Posterior vena cava (tissue), 2 donors: ENCODE measurements at regions of chr10 and their contacts with region 1.

Region 1: GRCh38 chr10:123624086-123624485 is 42.1 kb upstream of the GPR26 start:
- DNase-seq: no peak

Region 2: DNA sequence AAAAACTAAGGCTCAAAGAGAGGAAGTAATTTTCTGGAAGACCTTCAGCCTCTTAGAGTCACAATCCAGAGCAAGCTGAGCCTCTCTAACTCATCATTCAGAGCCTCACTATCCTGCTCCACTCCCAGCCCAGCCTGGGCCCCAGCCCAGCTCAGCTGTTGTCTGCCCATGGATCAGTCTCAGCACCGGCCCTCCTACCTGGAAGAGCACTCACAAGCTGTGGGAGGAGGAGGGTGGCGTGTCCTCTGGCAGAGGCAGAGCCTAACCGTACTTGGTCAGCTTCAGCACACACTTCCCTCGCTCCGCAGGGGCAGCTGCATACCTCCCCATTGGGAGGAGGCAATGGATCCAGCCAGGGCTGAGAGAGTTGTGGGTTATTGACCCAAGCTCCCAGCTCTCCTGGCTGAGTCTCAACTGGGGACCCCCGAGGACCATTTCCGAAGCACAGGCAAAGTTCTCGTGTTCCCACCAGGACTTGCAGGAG is 24.7 kb before region 1 on chr10:
- intact Hi-C with region 1: loop called in 1 of 2 experiments (anchors 2 kb)
- DNase-seq: no peak